Activated CD4-positive, alpha-beta T cell treated with anti-CD3 and anti-CD28 coated beads for 36 hours (primary cell): ENCODE measurements at regions of chr10 and their contacts with region 1.

Region 1: GRCh38 chr10:100998991-100999741 is 442 bp upstream of the LZTS2 start:
- DNase-seq: peak; percentile 87
- ATAC-seq: peak; percentile 59
- H3K4me3 Mint-ChIP-seq: peak overlapping the region; percentile 76
- H3K27ac Mint-ChIP-seq: peak overlapping the region; percentile 81
- H3K4me1 Mint-ChIP-seq: peaks cover 20% of the 10 kb centered on the region
- H3K27me3 Mint-ChIP-seq: no peaks in the 10 kb centered on the region

Region 2: GRCh38 chr10:100346765-100347567 is 652.2 kb before region 1 on chr10 and contains the start of gene SCD:
- CTCF ChIA-PET with region 1: no interaction called
- POLR2A ChIA-PET with region 1: no interaction called
- intact Hi-C with region 1: loop called in 1 of 2 experiments (anchors 5 kb)
- DNase-seq: peak; percentile 94
- ATAC-seq: peak; percentile 92
- H3K4me3 Mint-ChIP-seq: peak within 1 kb of the TSS; percentile 88
- H3K27ac Mint-ChIP-seq: peak within 1 kb of the TSS; percentile 91
- H3K4me1 Mint-ChIP-seq: peaks cover 44% of the 10 kb centered on the region
- H3K27me3 Mint-ChIP-seq: no peaks in the 10 kb centered on the region
- total RNA-seq, gene SCD: 203 to 206 TPM

Region 3: DNA sequence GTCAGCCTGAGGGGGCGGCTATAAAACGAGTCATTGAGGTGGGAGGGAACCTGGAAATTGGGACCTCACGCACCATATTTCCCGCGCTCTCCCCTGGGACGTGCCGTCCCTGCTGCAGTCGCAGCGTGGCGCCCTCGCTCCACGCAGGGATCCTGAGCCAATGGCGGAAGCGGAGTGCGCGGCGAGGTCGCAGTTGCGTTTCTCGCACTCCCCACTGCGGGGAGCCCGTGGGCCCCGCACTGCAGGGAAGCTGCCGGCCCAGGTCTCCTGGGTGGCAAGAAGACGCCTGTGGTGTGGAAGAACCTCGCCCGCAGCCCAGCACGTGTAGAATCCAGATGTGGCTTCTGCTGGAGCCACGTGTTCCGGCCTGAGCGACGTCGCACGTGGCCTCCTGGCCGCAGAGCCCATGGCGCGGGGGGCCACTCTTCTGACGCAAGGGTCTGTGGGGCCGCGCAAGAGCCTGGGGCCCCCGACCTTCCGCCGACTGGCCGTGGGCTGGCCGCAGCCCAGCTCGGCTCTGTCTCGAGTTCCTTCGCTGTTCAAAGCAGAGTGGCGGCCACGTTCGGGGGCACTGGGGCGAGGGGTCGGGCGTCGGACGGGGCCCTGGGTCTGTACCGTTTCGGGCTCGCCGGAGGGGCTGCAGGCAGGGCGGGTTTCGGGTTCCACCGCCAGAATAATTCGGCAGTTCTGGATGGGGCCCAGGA is 437.0 kb before region 1 on chr10:
- CTCF ChIA-PET with region 1: no interaction called
- POLR2A ChIA-PET with region 1: no interaction called
- intact Hi-C with region 1: loop called in 1 of 2 experiments (anchors 5 kb)
- DNase-seq: peak; percentile 90
- ATAC-seq: peak; percentile 95
- H3K4me3 Mint-ChIP-seq: no peak overlapping the region
- H3K27ac Mint-ChIP-seq: no peak overlapping the region
- H3K4me1 Mint-ChIP-seq: peaks cover 11% of the 10 kb centered on the region
- H3K27me3 Mint-ChIP-seq: peaks cover 24% of the 10 kb centered on the region

Region 4: DNA sequence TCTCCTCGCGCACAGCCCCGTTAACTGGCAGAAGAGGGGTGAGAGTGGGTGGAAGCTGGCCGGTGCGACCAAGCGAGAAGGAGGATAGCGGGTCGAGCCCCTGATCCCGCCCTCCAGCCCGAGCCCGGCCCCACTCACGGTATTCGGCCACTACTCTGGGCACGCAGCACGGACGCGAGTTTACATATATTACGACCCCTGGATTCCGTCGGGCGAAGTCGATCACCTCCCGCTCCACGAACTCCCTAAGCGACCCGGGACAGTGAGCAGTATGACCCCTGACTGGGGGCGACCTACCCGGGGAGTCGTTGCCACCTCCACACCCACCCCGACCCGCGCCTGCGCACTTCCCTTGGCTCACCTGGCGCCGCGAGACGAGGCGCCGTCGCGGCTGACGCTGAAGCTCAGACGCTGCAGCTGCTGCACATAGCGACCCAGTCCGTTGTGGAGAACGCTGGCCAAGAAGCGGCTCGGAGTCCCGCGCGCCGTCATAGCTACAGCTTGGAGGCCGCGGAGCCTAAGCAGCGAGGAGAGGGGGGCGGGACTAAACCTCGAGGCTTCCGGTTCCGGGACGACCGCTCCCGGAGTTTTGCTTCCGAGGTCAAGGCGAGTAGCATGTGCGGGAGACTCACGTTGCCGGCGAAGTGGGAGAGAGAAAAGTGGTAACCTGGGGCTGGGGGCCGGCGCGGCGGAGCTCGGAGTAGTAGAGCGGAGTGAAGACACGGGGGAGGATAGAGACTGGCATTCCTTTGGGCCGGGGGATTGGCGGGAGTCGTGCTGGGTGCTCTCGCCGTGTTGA is 12.0 kb before region 1 on chr10 and contains the starts of genes MRPL43 and TWNK:
- CTCF ChIA-PET with region 1: interaction called, 42 read pairs
- POLR2A ChIA-PET with region 1: no interaction called
- intact Hi-C with region 1: loop called (anchors 1 kb)
- DNase-seq: peak; percentile 93
- ATAC-seq: peak; percentile 98
- H3K4me3 Mint-ChIP-seq: peak within 1 kb of the TSS; percentile 100
- H3K27ac Mint-ChIP-seq: peak within 1 kb of the TSS; percentile 94
- H3K4me1 Mint-ChIP-seq: peaks cover 43% of the 10 kb centered on the region
- H3K27me3 Mint-ChIP-seq: no peaks in the 10 kb centered on the region
- total RNA-seq, gene MRPL43: 53.4 to 62.6 TPM
- total RNA-seq, gene TWNK: 13.8 to 17.9 TPM

Region 5: DNA sequence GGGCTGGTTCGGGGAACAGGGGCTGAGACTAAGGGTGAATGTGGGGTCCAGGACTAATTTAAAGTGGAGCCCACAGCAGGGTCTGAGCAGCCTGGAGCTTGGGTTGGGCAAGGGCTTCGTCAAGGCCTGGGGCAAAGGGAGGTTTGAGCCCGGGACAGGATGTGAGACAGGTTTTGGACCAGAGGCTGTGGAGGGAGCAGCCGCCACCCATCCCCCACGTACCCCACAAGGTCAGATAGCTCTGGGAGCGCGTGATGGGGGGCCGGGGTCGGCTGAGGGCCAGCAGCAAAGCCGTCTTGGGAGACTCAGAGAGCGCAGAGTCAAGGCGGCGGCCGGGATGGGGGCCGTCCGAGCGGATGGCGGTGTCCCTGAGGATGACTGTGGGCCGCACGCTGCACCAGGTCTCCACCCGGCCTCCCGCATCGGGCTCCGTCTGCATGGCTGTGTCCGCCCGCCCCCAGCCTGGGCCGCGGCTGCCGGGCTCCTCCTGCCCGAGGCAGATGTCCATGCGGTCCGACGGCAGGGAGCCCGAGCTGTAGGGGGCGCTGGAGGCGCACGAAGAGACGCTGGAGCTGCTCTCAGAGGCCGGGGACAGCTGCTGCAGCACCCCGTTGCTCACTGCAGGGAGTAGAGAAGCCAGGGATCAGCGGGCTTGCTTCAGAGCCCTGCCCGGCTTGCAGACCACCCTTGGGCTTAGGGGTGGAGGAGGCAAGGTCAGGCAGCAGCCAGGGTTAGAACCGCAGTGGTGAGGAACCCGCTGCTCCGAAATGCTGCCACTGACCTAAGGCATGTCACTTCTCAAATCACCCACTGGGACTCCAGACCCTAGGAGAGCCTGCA is 19.7 kb after region 1 on chr10:
- CTCF ChIA-PET with region 1: interaction called, 73 read pairs
- POLR2A ChIA-PET with region 1: no interaction called
- intact Hi-C with region 1: loop called (anchors 1 kb)
- DNase-seq: peak; percentile 93
- ATAC-seq: peak; percentile 87
- H3K4me3 Mint-ChIP-seq: no peak overlapping the region
- H3K27ac Mint-ChIP-seq: no peak overlapping the region
- H3K4me1 Mint-ChIP-seq: peaks cover 12% of the 10 kb centered on the region
- H3K27me3 Mint-ChIP-seq: peaks cover 37% of the 10 kb centered on the region

Region 6: DNA sequence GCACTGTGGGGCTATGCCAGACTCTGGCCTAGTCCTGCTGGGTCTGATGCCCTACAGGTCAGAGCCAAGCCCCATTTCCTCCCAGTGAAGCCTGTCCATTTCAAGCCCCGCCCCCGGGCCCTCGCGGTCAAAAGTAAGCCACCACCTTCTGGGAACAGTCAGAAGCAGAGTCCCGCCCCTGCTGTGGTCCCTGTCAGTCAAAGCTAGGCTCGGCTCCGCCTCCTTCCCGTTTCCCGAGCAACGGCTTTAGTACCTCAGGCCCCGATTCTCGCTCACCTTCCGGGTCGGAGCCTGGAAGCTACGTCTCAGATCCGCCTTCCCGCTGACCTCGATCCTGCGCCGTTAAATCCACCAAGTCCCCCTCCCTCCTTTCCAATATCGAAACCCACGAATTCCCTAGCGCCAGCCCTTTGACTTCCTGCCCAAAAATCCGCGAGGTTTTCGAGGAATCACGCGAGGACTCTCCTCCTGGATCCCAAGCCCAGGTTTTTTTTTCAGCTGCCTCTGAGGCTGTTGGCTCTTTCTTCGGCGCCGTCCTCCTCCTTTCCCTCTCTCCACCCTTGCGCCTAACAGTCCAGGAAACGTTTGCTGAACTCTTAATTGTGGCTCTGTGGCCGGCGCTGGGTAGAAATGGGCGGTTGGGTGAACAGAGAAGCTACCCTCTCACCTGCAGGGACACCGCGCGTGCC is 43.6 kb after region 1 on chr10:
- CTCF ChIA-PET with region 1: interaction called, 8 read pairs
- POLR2A ChIA-PET with region 1: no interaction called
- intact Hi-C with region 1: loop called in 1 of 2 experiments (anchors 2 kb)
- DNase-seq: peak; percentile 96
- ATAC-seq: peak; percentile 96
- H3K4me3 Mint-ChIP-seq: peak overlapping the region; percentile 79
- H3K27ac Mint-ChIP-seq: peak overlapping the region; percentile 79
- H3K4me1 Mint-ChIP-seq: peaks cover 21% of the 10 kb centered on the region
- H3K27me3 Mint-ChIP-seq: peaks cover 14% of the 10 kb centered on the region